ENCODE measurements at regions of chr11 and their contacts with region 1.

Region 1: DNA sequence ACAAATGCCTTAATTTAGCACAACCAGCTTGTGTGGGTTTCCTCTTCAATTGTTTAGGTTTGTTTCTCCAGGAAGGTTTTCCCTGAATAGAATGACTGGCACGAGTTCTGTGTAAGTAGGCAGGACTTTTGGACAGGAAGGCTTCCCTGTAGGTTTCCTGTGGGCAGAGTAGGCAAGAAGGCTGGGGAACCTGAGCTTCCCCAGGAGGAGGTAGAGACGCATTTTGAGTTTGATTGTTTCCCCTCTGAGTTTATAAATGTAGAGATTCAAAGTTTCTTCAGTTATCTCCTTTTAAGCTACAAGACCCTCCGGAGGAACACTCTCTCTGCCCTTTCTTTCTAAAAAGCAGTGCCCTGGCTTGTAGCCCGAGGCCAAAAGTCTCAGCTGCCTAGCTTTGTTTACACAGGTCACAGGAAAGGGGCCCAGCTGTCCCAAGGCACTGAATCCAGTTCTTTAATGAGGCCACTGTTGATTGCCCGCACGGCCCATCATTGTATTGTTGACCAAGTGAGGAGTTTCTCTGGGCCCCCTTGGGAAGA is 66.6 kb upstream of the RDX start:
- DNase-seq: peak in 2 of 7 donors; percentile 41 to 66
- H3K4me3 ChIP-seq: no peak overlapping the region
- H3K27ac ChIP-seq: peak overlapping the region in 4 of 5 donors; percentile 47 to 77 (median 57)
- H3K4me1 ChIP-seq: peaks cover 30 to 38% of the 10 kb centered on the region in 2 donors
- H3K27me3 ChIP-seq: no peaks in the 10 kb centered on the region
- CTCF ChIP-seq: no peak
- POLR2A ChIP-seq: peak in 1 of 2 donors; percentile 13

Region 2: GRCh38 chr11:110305169-110306018 is 57.6 kb before region 1 on chr11:
- intact Hi-C with region 1: loop called in 1 of 2 experiments (anchors 10 kb)
- DNase-seq: no peak
- H3K4me3 ChIP-seq: no peak overlapping the region
- H3K27ac ChIP-seq: peak overlapping the region in 4 of 5 donors; percentile 24 to 67 (median 46)
- H3K4me1 ChIP-seq: peaks cover 16 to 26% of the 10 kb centered on the region in 2 donors
- H3K27me3 ChIP-seq: no peaks in the 10 kb centered on the region
- CTCF ChIP-seq: no peak
- POLR2A ChIP-seq: peak in 1 of 2 donors; percentile 24

Region 3: DNA sequence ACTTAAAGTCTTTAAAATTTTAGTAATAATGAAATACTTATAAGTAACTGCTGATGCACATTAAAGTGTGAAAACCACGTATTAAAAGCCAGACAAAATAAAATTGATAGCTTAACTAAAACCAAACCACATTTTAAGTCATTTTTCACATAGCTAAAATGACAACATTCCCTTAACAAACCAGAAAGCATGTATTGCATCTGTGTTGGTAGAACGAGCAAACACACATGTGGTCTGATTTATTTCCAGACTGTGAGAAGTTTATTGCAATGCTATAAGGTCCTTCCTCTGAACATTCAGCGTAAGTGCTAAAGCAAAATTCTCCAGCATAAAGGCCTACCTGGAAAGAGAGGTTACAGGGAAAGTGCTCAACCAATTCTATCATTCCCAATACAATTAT is 291.4 kb after region 1 on chr11:
- intact Hi-C with region 1: no loop called
- DNase-seq: no peak
- H3K4me3 ChIP-seq: no peak overlapping the region
- H3K27ac ChIP-seq: no peak overlapping the region
- H3K4me1 ChIP-seq: no peaks in the 10 kb centered on the region
- H3K27me3 ChIP-seq: no peaks in the 10 kb centered on the region
- CTCF ChIP-seq: no peak
- POLR2A ChIP-seq: no peak